ENCODE measurements at regions of chrX and their contacts with region 1.

Region 1: GRCh38 chrX:25968920-25969319 is 169.2 kb upstream of the MAGEB18 start:
- DNase-seq: no peak
- ATAC-seq: no peak
- H3K4me3 ChIP-seq: no peak overlapping the region
- H3K27ac ChIP-seq: no peak overlapping the region
- H3K4me1 ChIP-seq: no peaks in the 10 kb centered on the region
- H3K27me3 ChIP-seq: no peaks in the 10 kb centered on the region
- CTCF ChIP-seq: 0 out of 2 replicates have a peak, but pooled peaks have one; percentile 21
- POLR2A ChIP-seq: no peak
- RAD21 ChIP-seq: peak; percentile 27; the same call in 1 of the 2 replicates

Region 2: GRCh38 chrX:25523574-25524540 is 445.1 kb before region 1 on chrX:
- CTCF ChIA-PET with region 1: no interaction called
- POLR2A ChIA-PET with region 1: no interaction called
- dilution Hi-C with region 1: no loop called
- in situ Hi-C with region 1: no loop called
- intact Hi-C with region 1: loop called (anchors 2 kb)
- DNase-seq: peak; percentile 36
- ATAC-seq: peak; percentile 56; the same call in 1 of the 2 replicates
- H3K4me3 ChIP-seq: no peak overlapping the region
- H3K27ac ChIP-seq: no peak overlapping the region
- H3K4me1 ChIP-seq: no peaks in the 10 kb centered on the region
- H3K27me3 ChIP-seq: no peaks in the 10 kb centered on the region
- CTCF ChIP-seq: peak; percentile 42
- POLR2A ChIP-seq: no peak
- RAD21 ChIP-seq: peak; percentile 57

Region 3: DNA sequence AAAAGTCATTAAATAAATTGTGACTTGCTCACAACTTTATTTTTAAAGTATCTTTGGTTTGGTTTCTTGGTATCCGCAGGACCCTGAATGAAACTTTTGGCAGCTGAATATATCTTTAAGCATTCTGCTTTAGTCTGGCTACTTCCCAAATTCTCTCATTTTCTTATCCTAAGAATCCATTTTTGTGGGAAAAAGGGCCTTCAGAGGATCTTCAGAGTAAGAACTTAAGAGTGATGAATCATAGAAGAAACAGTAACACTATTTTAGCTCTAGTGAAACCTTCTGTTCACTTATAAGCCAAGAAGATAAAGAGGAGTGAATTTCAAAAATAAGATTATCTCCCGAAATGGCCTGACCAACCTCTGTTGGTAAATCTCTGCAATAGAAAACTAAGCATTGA is 371.4 kb before region 1 on chrX:
- CTCF ChIA-PET with region 1: no interaction called
- POLR2A ChIA-PET with region 1: no interaction called
- dilution Hi-C with region 1: no loop called
- in situ Hi-C with region 1: no loop called
- intact Hi-C with region 1: no loop called
- DNase-seq: no peak
- ATAC-seq: no peak
- H3K4me3 ChIP-seq: no peak overlapping the region
- H3K27ac ChIP-seq: no peak overlapping the region
- H3K4me1 ChIP-seq: no peaks in the 10 kb centered on the region
- H3K27me3 ChIP-seq: no peaks in the 10 kb centered on the region
- CTCF ChIP-seq: no peak
- POLR2A ChIP-seq: no peak
- RAD21 ChIP-seq: no peak

Measured in IMR-90 (cell line).